ENCODE measurements at regions of chr12 and their contacts with region 1.

Region 1: GRCh38 chr12:57830393-57830792 is 11.9 kb upstream of the AVIL start:
- DNase-seq: no peak

Region 2: DNA sequence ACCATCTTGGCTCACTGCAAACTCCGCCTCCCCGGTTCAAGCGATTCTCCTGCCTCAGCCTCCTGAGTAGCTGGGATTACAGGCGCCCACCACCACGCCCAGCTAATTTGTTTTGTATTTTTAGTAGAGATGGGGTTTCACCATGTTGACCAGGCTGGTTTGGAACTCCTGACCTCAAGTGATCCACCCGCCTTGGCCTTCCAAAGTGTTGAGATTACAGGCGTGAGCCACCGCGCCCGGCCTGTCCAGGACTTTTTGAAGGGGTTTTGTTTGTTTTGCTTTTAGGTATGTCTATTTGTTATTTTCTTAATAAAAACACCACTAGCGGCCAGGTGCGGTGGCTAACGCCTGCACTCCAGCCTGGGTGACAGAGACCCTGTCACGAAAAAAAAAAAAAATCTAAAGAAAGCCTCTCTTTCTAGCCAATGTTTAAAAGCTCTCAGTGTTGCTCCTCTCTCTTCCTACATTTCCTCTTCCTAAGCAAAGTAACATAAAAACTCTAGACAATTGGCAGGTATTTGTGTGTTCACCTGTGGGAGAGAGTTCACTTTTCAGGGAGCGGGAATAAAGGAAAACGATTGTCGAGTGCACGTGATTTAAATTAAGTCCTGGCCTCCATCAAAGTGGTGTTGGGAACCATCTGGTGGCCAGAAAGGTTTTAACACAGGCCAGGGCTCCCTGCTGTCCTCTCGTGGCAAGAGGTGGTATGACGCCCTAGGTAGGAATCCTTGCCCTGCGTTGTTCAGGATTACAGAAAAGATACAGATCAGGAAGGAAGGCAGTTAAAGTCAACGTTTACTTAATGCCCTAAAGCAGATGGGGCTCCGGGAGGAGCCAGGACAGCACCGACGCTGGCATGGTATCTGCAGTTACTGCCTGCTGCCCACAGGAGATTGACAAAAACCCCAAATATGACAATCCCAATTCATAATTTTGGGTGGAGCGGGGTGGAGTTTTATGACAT is 74.7 kb after region 1 on chr12:
- intact Hi-C with region 1: loop called (anchors 2 kb)
- DNase-seq: peak; percentile 95

Measured in posterior vena cava (tissue), 2 donors.